GM10248 (cell line): ENCODE measurements at regions of chr3 and their contacts with region 1.

Region 1: GRCh38 chr3:141452036-141452435 is 34.8 kb upstream of the RASA2 start:
- DNase-seq: peak; percentile 67
- CTCF ChIP-seq: peak; percentile 80

Region 2: DNA sequence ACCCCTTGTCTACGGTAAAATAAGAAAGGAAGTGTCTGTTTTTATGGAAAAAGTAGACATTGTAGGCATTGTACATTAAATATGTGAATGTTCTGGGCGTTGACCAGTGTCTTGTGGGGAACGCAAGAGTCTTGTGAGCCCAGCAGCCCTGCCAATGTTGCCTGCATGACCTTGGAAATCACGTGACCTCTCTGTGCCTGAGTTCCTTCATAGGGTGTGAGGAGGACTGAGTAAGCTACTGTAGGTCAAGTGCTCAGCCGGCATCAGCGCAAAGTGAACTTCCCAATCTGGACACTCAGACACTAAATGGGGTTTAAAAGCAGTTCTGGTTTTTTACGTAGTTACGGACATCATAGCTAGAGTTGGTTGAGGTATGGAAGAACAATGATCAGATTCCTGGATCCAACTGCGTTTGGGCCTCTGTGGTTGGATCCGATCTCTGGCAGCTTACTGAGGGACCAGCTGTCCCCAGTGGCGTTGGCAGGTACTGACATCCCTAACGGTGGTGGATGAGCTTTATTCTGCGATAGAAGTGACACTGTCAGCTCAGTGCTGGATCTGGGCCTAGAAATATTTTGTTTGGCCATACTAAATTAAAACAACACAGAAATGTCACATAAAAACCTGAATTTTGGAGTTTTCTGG is 337.1 kb before region 1 on chr3:
- CTCF ChIA-PET with region 1: no interaction called
- POLR2A ChIA-PET with region 1: no interaction called
- DNase-seq: no peak
- CTCF ChIP-seq: no peak

Region 3: DNA sequence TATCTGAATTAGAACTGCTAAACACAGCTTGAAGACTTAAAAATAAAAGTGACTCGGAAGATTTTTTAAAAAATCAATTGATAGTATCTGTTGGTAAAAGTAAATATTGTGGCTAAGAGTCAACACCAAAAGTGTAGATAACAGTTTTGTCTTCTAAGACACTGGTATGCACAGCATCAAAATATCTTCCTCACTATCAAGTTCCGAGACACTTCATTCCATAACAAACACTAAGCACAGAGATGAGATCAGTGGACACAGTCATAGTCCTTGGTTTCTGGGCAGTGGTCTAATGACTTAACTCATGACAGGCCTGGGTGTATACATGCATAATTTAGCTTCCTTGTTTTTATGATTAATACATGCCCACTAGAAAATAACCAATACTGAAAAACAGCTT is 157.2 kb before region 1 on chr3:
- CTCF ChIA-PET with region 1: interaction called, 398 read pairs
- POLR2A ChIA-PET with region 1: no interaction called
- DNase-seq: no peak
- CTCF ChIP-seq: no peak

Region 4: DNA sequence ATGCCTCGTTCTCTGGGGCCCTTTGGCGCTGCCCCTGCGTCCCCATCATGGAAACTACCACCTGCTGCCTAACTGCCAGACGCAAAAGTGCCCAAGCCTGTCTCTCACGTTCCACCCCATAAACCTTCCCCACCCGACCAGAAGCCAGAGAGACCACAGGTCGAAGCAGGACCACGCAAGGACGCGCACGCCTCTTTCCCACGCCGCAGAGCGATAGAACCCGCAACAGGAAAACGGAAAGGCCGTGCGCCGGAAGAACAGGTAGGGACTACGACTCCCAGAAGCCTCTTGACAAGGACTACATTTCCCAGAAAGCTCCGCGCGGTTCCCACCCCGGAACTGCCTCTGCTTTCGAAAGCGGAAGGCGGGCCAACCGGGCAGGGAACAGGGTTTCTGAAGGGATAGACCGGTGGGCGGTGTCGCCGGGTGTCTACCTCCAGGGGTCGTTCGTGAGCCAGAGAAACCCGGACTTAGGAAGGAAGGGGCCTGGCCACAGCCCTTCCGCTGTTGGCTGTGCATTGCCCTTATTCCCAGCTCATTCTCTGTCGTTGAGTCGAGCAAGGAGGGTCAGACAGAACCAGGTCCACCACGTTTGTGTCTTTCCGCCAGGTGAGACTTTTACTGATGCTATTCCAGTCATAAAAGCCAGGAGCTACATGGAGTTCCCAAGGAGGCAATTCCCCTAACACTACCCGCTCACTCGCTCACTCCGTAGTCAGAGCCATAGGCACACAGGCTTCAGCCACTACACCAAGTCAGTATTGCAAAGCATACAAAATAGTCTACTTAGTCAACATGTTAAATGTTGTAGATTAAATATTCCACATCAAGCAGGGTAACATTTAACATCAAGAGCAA is 140.3 kb before region 1 on chr3:
- CTCF ChIA-PET with region 1: interaction called, 398 read pairs
- POLR2A ChIA-PET with region 1: no interaction called
- DNase-seq: peak; percentile 98
- CTCF ChIP-seq: peak; percentile 88

Region 5: GRCh38 chr3:141336672-141337522 is 115.1 kb before region 1 on chr3:
- CTCF ChIA-PET with region 1: interaction called, 12 read pairs
- POLR2A ChIA-PET with region 1: no interaction called
- DNase-seq: peak; percentile 78
- CTCF ChIP-seq: no peak

Region 6: DNA sequence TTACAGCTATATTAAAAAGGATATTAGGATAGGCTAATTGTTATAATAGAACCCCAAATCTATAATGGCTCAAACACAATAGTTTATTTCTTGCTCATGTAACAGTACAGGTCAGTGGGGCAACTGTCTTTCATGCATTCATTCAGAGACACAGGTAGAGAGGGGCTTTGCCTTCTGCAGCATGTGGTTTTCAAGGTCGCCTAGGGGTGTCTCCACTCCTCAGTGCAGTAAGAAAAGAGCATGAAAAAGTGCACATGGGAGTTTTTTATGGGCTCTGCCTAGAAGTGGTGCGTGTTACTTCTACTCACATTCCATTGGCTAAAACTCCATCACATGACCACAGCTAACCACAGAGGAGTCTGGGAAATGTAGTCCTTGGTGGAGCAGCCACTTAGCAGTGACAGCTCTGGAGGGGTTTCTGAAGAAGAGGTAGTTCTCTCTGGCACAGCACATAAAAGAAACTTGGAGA is 81.9 kb before region 1 on chr3:
- CTCF ChIA-PET with region 1: interaction called, 11 read pairs
- POLR2A ChIA-PET with region 1: no interaction called
- DNase-seq: peak; percentile 77
- CTCF ChIP-seq: peak; percentile 50

Region 7: DNA sequence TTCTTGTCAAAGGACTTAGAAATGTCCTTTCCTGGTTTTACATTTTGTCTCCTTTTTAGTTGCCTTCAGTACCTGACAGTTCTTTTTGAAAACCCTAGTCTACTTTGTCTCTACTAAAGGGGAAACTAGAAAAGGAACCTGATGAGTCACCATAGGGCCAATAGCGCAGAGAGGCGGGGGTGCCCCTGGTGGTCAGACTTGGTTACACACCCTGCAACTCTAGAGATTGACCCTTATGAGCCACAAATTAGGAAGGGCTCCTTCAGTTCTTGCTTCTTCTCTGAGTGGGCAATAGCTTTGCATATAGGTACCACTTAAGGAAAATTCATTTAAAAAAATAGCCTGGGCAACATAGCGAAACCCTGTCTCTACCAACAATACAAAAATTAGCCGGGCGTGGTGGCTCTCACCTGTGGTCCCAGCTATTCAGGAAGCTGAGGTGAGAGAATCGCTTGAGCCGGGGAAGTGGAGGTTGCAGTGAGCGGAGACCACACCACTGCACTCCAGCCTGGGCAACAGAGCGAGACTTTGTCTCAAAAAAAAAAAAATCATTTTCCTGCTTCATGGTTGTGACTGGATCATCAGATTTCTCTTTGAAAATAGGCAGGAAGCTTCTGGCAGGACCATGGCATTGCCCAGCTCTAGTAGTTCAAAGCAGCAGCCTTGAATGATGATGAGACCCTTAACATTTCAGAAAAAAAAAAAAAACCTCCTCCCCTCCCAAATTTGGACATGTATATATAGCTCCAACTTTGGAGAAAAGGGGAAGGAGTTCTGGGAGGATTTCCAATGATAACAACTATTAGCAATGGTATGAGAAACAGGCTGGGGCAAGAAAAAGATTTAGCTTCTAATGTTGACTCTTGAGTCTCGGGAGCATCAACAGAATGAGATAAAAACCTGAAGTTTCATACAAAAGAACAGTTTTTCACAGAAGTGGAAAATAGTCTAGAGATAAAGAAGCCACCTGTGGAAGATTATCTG is 10.4 kb before region 1 on chr3:
- CTCF ChIA-PET with region 1: interaction called, 161 read pairs
- POLR2A ChIA-PET with region 1: interaction called, 4 read pairs
- DNase-seq: peak; percentile 85
- CTCF ChIP-seq: peak; percentile 63

Region 8: DNA sequence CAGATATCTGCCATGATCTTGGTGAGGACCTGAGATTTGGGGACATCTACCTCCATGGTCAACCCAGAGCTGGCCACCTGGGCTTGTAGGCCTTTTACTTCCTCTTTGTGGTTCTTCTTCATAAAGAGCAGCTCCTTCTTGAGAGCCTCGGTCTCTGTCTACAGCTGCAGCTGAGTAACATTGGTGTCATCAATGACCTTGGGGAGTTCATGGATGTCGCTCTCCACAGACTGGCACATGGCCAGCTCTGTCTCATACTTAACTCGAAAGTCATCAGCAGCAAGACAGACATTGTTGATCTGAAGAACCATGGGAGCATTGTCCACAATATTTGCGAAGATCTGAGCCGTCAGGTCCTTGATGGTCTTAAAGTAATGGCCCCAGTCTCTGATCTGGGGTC is 19.1 kb after region 1 on chr3:
- CTCF ChIA-PET with region 1: interaction called, 12 read pairs
- POLR2A ChIA-PET with region 1: no interaction called
- DNase-seq: no peak
- CTCF ChIP-seq: no peak

Region 9: GRCh38 chr3:142754494-142754893 is 1302.5 kb after region 1 on chr3:
- CTCF ChIA-PET with region 1: no interaction called
- POLR2A ChIA-PET with region 1: no interaction called
- DNase-seq: no peak
- CTCF ChIP-seq: no peak